ENCODE measurements at regions of chr17 and their contacts with region 1.

Region 1: GRCh38 chr17:16521070-16521727 is 29.2 kb upstream of the LRRC75A start:
- DNase-seq: peak; percentile 79
- H3K4me3 ChIP-seq: no peak overlapping the region
- H3K27ac ChIP-seq: no peak overlapping the region
- H3K4me1 ChIP-seq: no peaks in the 10 kb centered on the region
- H3K27me3 ChIP-seq: no peaks in the 10 kb centered on the region
- CTCF ChIP-seq: peak; percentile 62 to 95 (median 94)
- POLR2A ChIP-seq: no peak

Region 2: DNA sequence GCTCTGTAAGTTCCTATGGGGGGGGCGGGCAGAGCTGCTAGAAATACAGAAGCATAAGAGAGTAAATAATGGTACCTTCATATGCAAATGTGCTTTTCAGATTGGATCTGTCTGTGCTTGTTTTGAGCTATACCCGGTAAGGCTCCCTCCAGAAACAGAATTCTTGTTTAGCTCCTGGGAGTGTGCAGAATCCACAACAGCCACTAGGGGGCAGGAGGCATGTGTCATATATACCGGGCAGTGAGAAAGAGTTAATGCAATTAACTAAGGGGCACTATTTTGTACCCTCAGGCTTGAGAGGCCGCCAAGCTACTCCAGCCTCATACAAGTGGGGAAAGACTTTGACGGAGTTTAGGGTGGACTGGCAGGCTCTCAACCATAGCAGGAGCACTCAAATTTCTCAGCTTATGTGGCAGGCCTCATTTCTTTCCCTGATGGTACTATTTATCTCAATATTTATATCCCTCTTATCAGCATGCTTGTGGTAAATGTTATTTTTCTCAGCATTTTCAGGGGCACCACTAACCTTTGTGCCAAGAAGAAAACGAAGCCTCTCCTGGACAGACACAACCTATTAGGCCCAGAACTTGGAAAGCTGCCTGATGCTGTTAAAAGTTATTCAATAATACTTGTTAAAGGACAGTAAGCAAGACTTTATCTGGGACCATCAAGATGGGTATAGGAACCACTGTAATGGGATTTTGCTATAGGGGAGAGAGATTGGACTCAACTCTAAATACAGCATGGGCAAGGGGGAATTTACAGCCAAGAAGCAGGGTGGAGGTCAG is 157.3 kb before region 1 on chr17:
- intact Hi-C with region 1: loop called (anchors 5 kb)
- DNase-seq: peak; percentile 70
- H3K4me3 ChIP-seq: no peak overlapping the region
- H3K27ac ChIP-seq: peak overlapping the region in 1 of 2 donors; percentile 26
- H3K4me1 ChIP-seq: no peaks in the 10 kb centered on the region
- H3K27me3 ChIP-seq: no peaks in the 10 kb centered on the region
- CTCF ChIP-seq: peak; percentile 77 to 86 (median 82)
- POLR2A ChIP-seq: no peak

Region 3: GRCh38 chr17:16453493-16453851 is 67.7 kb before region 1 on chr17:
- intact Hi-C with region 1: loop called (anchors 1 kb)
- DNase-seq: no peak
- H3K4me3 ChIP-seq: no peak overlapping the region
- H3K27ac ChIP-seq: no peak overlapping the region
- H3K4me1 ChIP-seq: no peaks in the 10 kb centered on the region
- H3K27me3 ChIP-seq: no peaks in the 10 kb centered on the region
- CTCF ChIP-seq: peak in 1 of 4 experiments; percentile 8
- POLR2A ChIP-seq: no peak

Region 4: GRCh38 chr17:16477255-16477654 is 43.9 kb before region 1 on chr17:
- intact Hi-C with region 1: no loop called
- DNase-seq: no peak
- H3K4me3 ChIP-seq: no peak overlapping the region
- H3K27ac ChIP-seq: peak overlapping the region; percentile 35 to 49
- H3K4me1 ChIP-seq: no peaks in the 10 kb centered on the region
- H3K27me3 ChIP-seq: no peaks in the 10 kb centered on the region
- CTCF ChIP-seq: no peak
- POLR2A ChIP-seq: no peak